PC-9 (cell line): ENCODE measurements at regions of chr1 and their contacts with region 1.

Region 1: DNA sequence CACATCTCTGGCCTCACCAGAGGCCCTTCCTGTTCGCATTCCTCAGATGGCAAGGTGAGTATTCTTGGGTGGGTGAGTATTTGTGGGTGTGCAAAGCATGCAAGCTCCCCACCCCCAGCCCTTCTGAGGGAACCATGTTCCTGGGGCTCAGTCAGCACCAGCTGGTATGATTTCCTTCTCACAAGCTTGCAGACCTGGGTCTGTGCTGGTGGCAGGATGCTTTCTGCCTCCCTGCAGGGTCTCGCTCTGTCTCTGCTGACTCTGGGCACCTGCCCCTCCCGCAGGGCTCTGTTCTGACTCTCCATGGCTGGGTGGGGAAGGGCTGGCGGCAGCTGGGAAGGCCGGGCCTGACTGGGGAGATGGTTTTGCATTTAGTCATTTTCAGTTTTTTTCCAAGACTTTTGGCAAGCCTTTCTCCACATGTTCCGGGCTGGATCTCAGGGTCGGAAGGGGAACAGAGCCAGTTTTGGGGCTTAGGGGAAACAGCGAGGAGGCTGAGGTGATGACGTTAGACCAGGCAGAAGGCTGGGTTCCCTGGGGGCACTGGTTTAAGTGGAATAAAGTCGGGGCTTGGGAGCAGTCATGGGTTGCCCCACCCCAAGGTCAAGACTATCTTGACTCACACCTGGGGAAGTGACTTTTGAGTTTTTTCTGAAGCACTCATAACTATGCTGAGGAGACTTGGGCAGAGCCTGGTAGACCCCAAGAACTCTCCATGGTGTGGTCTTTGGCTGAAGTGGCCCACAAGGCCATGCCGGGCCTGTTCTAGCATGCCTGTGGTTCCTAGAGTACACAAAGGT is 6.2 kb downstream of the RASSF5 start:
- DNase-seq: peak; percentile 89 to 92
- H3K4me3 ChIP-seq: peak overlapping the region; percentile 42; the same call in 1 of the 2 replicates
- H3K27ac ChIP-seq: peak overlapping the region; percentile 87
- H3K4me1 ChIP-seq: peaks cover 64% of the 10 kb centered on the region
- H3K27me3 ChIP-seq: no peaks in the 10 kb centered on the region
- CTCF ChIP-seq: no peak

Region 2: GRCh38 chr1:206524739-206525369 is 11.3 kb after region 1 on chr1:
- CTCF ChIA-PET with region 1: no interaction called
- POLR2A ChIA-PET with region 1: no interaction called
- intact Hi-C with region 1: loop called (anchors 1 kb)
- DNase-seq: peak; percentile 56 to 66
- H3K4me3 ChIP-seq: no peak overlapping the region
- H3K27ac ChIP-seq: no peak overlapping the region
- H3K4me1 ChIP-seq: peaks cover 23% of the 10 kb centered on the region
- H3K27me3 ChIP-seq: no peaks in the 10 kb centered on the region
- CTCF ChIP-seq: no peak

Region 3: GRCh38 chr1:206544562-206545257 is 31.2 kb after region 1 on chr1:
- CTCF ChIA-PET with region 1: interaction called, 6 read pairs
- POLR2A ChIA-PET with region 1: no interaction called
- intact Hi-C with region 1: loop called (anchors 2 kb)
- DNase-seq: peak in 1 of 2 experiments; percentile 73
- H3K4me3 ChIP-seq: no peak overlapping the region
- H3K27ac ChIP-seq: no peak overlapping the region
- H3K4me1 ChIP-seq: no peaks in the 10 kb centered on the region
- H3K27me3 ChIP-seq: no peaks in the 10 kb centered on the region
- CTCF ChIP-seq: peak; percentile 92